ENCODE measurements at regions of chr6 and their contacts with region 1.

Region 1: GRCh38 chr6:62390401-62390800 is 104.4 kb upstream of the KHDRBS2 start:
- DNase-seq: no peak
- ATAC-seq: no peak

Region 2: DNA sequence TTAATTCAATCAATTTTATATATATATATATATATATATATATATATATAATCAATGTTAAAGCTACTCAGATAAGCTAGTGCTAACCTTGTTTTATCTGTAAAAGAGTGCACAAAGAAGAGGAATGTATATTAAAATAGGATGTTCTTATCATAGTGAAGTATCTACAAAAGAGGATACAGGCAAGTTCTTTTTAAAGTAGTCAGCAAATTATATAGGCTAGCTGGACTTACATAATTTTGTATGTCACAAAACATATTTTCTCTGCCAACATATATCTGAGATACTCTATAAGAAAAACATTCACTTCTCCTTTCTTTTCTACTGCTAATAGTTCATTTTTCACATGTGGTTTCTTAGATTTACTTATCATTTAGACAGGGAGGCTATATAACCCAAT is 144.3 kb before region 1 on chr6:
- intact Hi-C with region 1: loop called in 1 of 2 experiments (anchors 10 kb)
- DNase-seq: no peak
- ATAC-seq: no peak